ENCODE measurements at regions of chr9 and their contacts with region 1.

Region 1: DNA sequence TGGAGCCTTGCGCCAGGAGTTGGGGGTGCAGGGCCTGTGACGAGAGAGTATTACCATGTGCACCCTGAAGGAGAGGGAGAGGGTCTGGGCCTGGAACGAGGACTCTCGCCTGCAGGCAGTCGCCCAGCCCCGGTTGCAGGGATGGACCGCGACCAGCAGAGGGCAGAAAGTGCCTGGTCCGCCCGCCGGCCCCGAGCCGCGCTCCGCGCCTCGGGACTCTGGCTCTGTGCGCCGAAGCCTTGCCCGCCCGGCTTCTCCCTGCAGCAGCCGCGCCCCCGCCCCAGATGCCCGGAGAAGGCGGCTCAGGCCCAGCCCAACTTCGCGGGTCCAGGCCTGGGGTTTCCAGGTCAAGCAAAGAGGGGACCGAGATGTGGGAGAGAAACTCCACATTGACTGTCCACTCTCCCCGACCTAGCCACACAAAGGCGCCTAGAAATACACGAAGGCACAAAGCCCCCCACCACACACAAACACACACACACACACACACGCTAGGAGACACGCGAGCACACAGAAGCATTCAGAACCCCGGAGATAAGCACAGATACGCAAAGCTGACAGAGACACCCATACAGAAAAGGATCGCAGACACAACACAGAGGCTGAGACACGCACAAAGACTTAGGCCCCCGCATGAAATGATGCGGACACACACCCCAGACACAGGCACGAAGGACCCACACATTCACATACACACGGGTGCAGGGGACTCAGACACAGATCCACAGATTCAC is 2.0 kb upstream of the LMX1B start:
- DNase-seq: peak; percentile 94
- H3K4me3 ChIP-seq: peak overlapping the region in 1 of 2 experiments; percentile 36; a peak in 1 of 4 replicates
- H3K27ac ChIP-seq: no peak overlapping the region
- H3K4me1 ChIP-seq: no peaks in the 10 kb centered on the region; a peak in 1 of 4 replicates
- H3K27me3 ChIP-seq: peaks cover 88% of the 10 kb centered on the region
- CTCF ChIP-seq: peak; percentile 70
- EP300 ChIP-seq: no peak
- RAD21 ChIP-seq: peak; percentile 68

Region 2: GRCh38 chr9:126108240-126108639 is 503.5 kb before region 1 on chr9:
- CTCF ChIA-PET with region 1: no interaction called
- POLR2A ChIA-PET with region 1: no interaction called
- DNase-seq: no peak
- H3K4me3 ChIP-seq: no peak overlapping the region
- H3K27ac ChIP-seq: no peak overlapping the region
- H3K4me1 ChIP-seq: no peaks in the 10 kb centered on the region
- H3K27me3 ChIP-seq: peaks cover 11% of the 10 kb centered on the region; the same call in 1 of the 2 replicates
- CTCF ChIP-seq: no peak
- EP300 ChIP-seq: no peak
- RAD21 ChIP-seq: no peak

Region 3: GRCh38 chr9:126564711-126565110 is 47.0 kb before region 1 on chr9:
- CTCF ChIA-PET with region 1: interaction called, 14 read pairs
- POLR2A ChIA-PET with region 1: no interaction called
- DNase-seq: peak; percentile 48
- H3K4me3 ChIP-seq: no peak overlapping the region
- H3K27ac ChIP-seq: no peak overlapping the region
- H3K4me1 ChIP-seq: peaks cover 0 to 21% of the 10 kb centered on the region in 2 experiments; a peak in 1 of 4 replicates
- H3K27me3 ChIP-seq: peaks cover 25% of the 10 kb centered on the region
- CTCF ChIP-seq: peak; percentile 21; the same call in 1 of the 2 replicates
- EP300 ChIP-seq: no peak
- RAD21 ChIP-seq: peak; percentile 21; the same call in 1 of the 2 replicates

Region 4: GRCh38 chr9:126626127-126626925 is 14.6 kb after region 1 on chr9:
- CTCF ChIA-PET with region 1: interaction called, 17 read pairs
- POLR2A ChIA-PET with region 1: no interaction called
- DNase-seq: no peak
- H3K4me3 ChIP-seq: no peak overlapping the region; a peak in 1 of 4 replicates
- H3K27ac ChIP-seq: no peak overlapping the region
- H3K4me1 ChIP-seq: peaks cover 0 to 17% of the 10 kb centered on the region in 2 experiments; a peak in 2 of 4 replicates
- H3K27me3 ChIP-seq: peaks cover 100% of the 10 kb centered on the region
- CTCF ChIP-seq: no peak
- EP300 ChIP-seq: no peak
- RAD21 ChIP-seq: no peak

Region 5: DNA sequence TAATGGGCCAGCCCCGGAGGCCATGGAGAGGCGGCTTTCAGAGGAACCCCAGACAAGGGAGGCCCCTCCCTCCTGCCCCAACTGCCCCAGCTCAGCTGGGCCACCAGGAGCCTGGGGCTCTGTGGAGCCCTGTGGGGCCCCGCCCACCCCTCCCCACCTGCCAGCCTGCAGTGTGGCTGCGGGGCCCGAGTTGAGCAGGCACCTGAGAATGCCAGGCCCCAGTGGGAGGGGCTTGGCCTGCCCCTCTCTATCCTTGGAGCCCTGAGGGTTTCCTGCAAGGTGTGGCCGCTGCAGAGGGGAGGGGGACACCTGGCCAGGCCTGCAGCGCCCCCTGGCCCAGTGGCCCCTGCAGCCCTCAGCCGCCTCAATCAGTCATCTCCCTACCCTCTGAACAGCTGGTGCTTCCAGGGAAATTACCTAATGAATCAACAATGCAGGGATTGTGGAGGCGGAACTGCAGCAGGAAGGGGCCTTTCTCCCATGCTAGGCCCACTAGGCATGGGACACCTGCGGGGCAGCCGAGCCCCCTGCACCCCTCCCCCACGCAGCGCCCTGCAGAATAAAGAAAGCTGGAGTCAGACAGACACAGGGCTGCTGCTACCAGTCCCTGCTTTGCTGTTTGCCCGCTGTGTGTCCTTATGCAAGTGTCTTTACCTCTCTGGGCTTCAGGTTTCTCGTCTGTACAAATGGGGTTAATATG is 49.9 kb after region 1 on chr9:
- CTCF ChIA-PET with region 1: no interaction called
- POLR2A ChIA-PET with region 1: no interaction called
- DNase-seq: no peak
- H3K4me3 ChIP-seq: no peak overlapping the region
- H3K27ac ChIP-seq: no peak overlapping the region
- H3K4me1 ChIP-seq: no peaks in the 10 kb centered on the region; a peak in 1 of 4 replicates
- H3K27me3 ChIP-seq: peaks cover 17% of the 10 kb centered on the region; the same call in 1 of the 2 replicates
- CTCF ChIP-seq: no peak
- EP300 ChIP-seq: no peak
- RAD21 ChIP-seq: no peak

Measured in SK-N-SH (cell line).